ENCODE measurements at regions of chr15 and their contacts with region 1.

Region 1: GRCh38 chr15:79028411-79028964 is 62.1 kb downstream of the RASGRF1 start:
- DNase-seq: peak; percentile 76

Region 2: GRCh38 chr15:79184465-79184892 is 156.0 kb after region 1 on chr15:
- in situ Hi-C with region 1: loop called (anchors 25 kb)
- DNase-seq: peak; percentile 77